Common myeloid progenitor, CD34-positive (primary cell): ENCODE measurements at regions of chr6 and their contacts with region 1.

Region 1: GRCh38 chr6:8219352-8219943 is 117.1 kb upstream of the EEF1E1 start:
- DNase-seq: peak; percentile 54 to 66 (median 61)
- H3K4me3 ChIP-seq: no peak overlapping the region
- H3K27ac ChIP-seq: no peak overlapping the region
- H3K4me1 ChIP-seq: no peaks in the 10 kb centered on the region
- H3K27me3 ChIP-seq: peaks cover 0 to 6% (median 2%) of the 10 kb centered on the region in 5 experiments

Region 2: DNA sequence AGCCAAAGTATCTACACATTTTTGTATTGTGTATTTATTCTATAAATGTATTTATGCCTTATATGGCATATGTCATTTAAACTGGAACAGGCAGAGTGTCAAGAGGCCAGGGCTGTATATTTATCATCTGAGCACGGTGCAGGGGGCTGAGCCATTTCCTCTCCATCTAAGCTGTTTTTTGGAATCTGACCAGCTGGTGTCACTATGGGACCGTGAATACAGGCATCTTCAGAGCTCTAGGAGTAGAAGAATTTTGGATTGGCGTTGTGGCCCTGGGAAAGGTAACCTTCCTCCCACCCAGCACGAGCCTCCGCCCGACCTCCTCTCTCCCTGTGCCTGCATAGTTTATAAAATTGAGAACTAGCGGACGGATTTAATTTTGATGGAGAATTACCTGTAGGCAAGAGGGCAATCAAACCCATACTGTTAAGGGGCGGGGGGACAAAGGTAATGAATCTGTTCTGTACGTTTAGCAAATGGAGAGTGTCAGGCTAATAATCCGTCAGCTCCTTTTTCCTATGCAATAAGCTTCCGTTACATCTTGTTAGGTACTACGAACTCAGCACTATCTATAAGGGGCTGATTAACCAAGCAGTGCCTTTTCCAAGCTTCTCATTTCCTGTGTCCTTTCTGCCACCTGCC is 88.1 kb before region 1 on chr6:
- CTCF ChIA-PET with region 1: interaction called, 146 read pairs
- POLR2A ChIA-PET with region 1: no interaction called
- DNase-seq: peak; percentile 61 to 78 (median 73)
- H3K4me3 ChIP-seq: no peak overlapping the region
- H3K27ac ChIP-seq: no peak overlapping the region
- H3K4me1 ChIP-seq: no peaks in the 10 kb centered on the region
- H3K27me3 ChIP-seq: peaks cover 0 to 6% (median 2%) of the 10 kb centered on the region in 5 experiments

Region 3: GRCh38 chr6:8139451-8139850 is 80.0 kb before region 1 on chr6:
- CTCF ChIA-PET with region 1: interaction called, 14 read pairs
- POLR2A ChIA-PET with region 1: no interaction called
- DNase-seq: no peak
- H3K4me3 ChIP-seq: no peak overlapping the region
- H3K27ac ChIP-seq: no peak overlapping the region
- H3K4me1 ChIP-seq: no peaks in the 10 kb centered on the region
- H3K27me3 ChIP-seq: peaks cover 0 to 2% (median 0%) of the 10 kb centered on the region in 5 experiments

Region 4: GRCh38 chr6:8201679-8202078 is 17.8 kb before region 1 on chr6:
- CTCF ChIA-PET with region 1: interaction called, 13 read pairs
- POLR2A ChIA-PET with region 1: no interaction called
- DNase-seq: no peak
- H3K4me3 ChIP-seq: no peak overlapping the region
- H3K27ac ChIP-seq: no peak overlapping the region
- H3K4me1 ChIP-seq: no peaks in the 10 kb centered on the region
- H3K27me3 ChIP-seq: peaks cover 0 to 3% (median 2%) of the 10 kb centered on the region in 5 experiments

Region 5: GRCh38 chr6:8207200-8208191 is 12.0 kb before region 1 on chr6:
- CTCF ChIA-PET with region 1: interaction called, 13 read pairs
- POLR2A ChIA-PET with region 1: no interaction called
- DNase-seq: no peak
- H3K4me3 ChIP-seq: no peak overlapping the region
- H3K27ac ChIP-seq: no peak overlapping the region
- H3K4me1 ChIP-seq: no peaks in the 10 kb centered on the region
- H3K27me3 ChIP-seq: peaks cover 0 to 3% (median 0%) of the 10 kb centered on the region in 5 experiments